Aorta (tissue), 5 donors: ENCODE measurements at regions of chr1 and their contacts with region 1.

Region 1: GRCh38 chr1:212488397-212489283 is 55.9 kb downstream of the NENF start:
- DNase-seq: peak in 1 of 2 donors; percentile 78
- ATAC-seq: peak; percentile 77
- H3K4me3 ChIP-seq: no peak overlapping the region
- H3K27ac ChIP-seq: peak overlapping the region in 1 of 2 donors; percentile 70
- H3K4me1 ChIP-seq: no peaks in the 10 kb centered on the region
- H3K27me3 ChIP-seq: no peaks in the 10 kb centered on the region

Region 2: GRCh38 chr1:212542761-212543187 is 54.1 kb after region 1 on chr1:
- intact Hi-C with region 1: loop called in 1 of 2 experiments (anchors 5 kb)
- DNase-seq: no peak
- ATAC-seq: no peak
- H3K4me3 ChIP-seq: no peak overlapping the region
- H3K27ac ChIP-seq: no peak overlapping the region
- H3K4me1 ChIP-seq: no peaks in the 10 kb centered on the region
- H3K27me3 ChIP-seq: no peaks in the 10 kb centered on the region